ENCODE measurements at regions of chr10 and their contacts with region 1.

Region 1: GRCh38 chr10:124992462-124993344 is 50.8 kb downstream of the ZRANB1 start:
- DNase-seq: peak; percentile 36 to 62 (median 55)
- H3K4me3 ChIP-seq: no peak overlapping the region
- H3K27ac ChIP-seq: no peak overlapping the region
- H3K4me1 ChIP-seq: peaks cover 0 to 9% (median 0%) of the 10 kb centered on the region in 4 experiments
- H3K27me3 ChIP-seq: no peaks in the 10 kb centered on the region

Region 2: GRCh38 chr10:124894569-124895215 is 98.0 kb before region 1 on chr10:
- CTCF ChIA-PET with region 1: no interaction called
- POLR2A ChIA-PET with region 1: no interaction called
- DNase-seq: no peak
- H3K4me3 ChIP-seq: no peak overlapping the region
- H3K27ac ChIP-seq: no peak overlapping the region
- H3K4me1 ChIP-seq: no peaks in the 10 kb centered on the region
- H3K27me3 ChIP-seq: peaks cover 0 to 7% (median 2%) of the 10 kb centered on the region in 5 experiments

Region 3: DNA sequence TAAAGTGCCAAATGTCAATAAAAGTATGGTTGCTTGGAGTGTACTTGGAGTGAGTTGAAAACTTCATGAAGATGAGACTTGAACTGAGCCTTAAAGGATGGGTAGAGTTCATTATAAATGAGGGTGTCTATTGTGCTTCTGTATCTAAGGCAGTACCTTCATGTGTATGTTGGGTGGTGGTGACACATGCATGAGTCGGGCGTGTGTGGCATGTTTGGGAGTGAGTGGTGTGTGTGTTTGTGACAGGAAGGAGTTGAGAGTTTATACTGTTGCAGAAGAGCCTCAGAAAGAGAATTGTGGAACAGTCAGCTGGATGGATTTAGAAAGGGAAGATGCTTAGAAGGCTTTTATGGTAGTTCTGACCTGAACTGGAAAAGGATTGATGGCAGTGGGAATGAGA is 56.8 kb before region 1 on chr10:
- CTCF ChIA-PET with region 1: no interaction called
- POLR2A ChIA-PET with region 1: no interaction called
- DNase-seq: peak in 2 of 3 donors; percentile 21 to 40
- H3K4me3 ChIP-seq: no peak overlapping the region
- H3K27ac ChIP-seq: no peak overlapping the region
- H3K4me1 ChIP-seq: peaks cover 3 to 12% (median 6%) of the 10 kb centered on the region in 4 experiments
- H3K27me3 ChIP-seq: no peaks in the 10 kb centered on the region

Region 4: GRCh38 chr10:125048101-125048864 is 55.6 kb after region 1 on chr10:
- CTCF ChIA-PET with region 1: interaction called, 13 read pairs
- POLR2A ChIA-PET with region 1: no interaction called
- DNase-seq: peak; percentile 49 to 72 (median 71)
- H3K4me3 ChIP-seq: no peak overlapping the region
- H3K27ac ChIP-seq: no peak overlapping the region
- H3K4me1 ChIP-seq: peaks cover 0 to 18% (median 11%) of the 10 kb centered on the region in 4 experiments
- H3K27me3 ChIP-seq: no peaks in the 10 kb centered on the region

Region 5: DNA sequence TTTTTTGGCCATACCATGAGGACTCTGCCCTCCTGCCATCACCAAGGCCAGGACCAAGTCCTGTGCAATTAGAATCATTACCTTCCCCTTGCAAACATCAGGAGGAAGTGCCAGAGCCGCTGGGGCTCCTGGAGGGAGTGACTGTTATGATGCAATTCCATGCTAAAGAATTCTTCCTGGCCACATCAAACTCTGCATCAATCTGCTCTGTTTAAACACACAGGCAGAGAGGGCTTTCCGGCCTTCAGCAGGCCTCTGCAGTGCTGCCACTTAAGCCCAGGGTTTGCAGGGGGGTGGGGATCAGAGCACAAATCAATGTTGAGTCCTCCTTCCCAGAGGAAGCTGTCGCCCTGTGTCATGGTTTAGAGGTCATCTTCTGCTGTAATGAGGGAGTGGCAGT is 109.5 kb after region 1 on chr10:
- CTCF ChIA-PET with region 1: no interaction called
- POLR2A ChIA-PET with region 1: no interaction called
- DNase-seq: no peak
- H3K4me3 ChIP-seq: no peak overlapping the region
- H3K27ac ChIP-seq: no peak overlapping the region
- H3K4me1 ChIP-seq: peaks cover 0 to 10% (median 4%) of the 10 kb centered on the region in 4 experiments
- H3K27me3 ChIP-seq: no peaks in the 10 kb centered on the region

Measured in common myeloid progenitor, CD34-positive (primary cell).